H1 (cell line): ENCODE measurements at regions of chr16 and their contacts with region 1.

Region 1: GRCh38 chr16:71707199-71707598 is 17.3 kb downstream of the PHLPP2 start:
- DNase-seq: peak in 1 of 2 experiments; percentile 21
- H3K4me3 ChIP-seq: peak overlapping the region in 1 of 4 experiments; percentile 16; a peak in 1 of 8 replicates
- H3K27ac ChIP-seq: peak overlapping the region; percentile 77
- H3K4me1 ChIP-seq: peaks cover 3 to 21% (median 13%) of the 10 kb centered on the region in 4 experiments; a peak in 5 of 7 replicates
- H3K27me3 ChIP-seq: no peaks in the 10 kb centered on the region
- CTCF ChIP-seq: no peak
- EP300 ChIP-seq: 0 out of 3 replicates have a peak, but pooled peaks of 1 of the 2 experiments have one; percentile 42
- POLR2A ChIP-seq: no peak
- RAD21 ChIP-seq: no peak

Region 2: GRCh38 chr16:71723537-71724319 is 16.5 kb after region 1 on chr16:
- CTCF ChIA-PET with region 1: no interaction called
- POLR2A ChIA-PET with region 1: interaction called, 21 read pairs
- DNase-seq: peak; percentile 17 to 86
- H3K4me3 ChIP-seq: peak overlapping the region; percentile 68 to 86 (median 76)
- H3K27ac ChIP-seq: peak overlapping the region; percentile 38; the same call in 1 of the 2 replicates
- H3K4me1 ChIP-seq: peaks cover 0 to 3% (median 1%) of the 10 kb centered on the region in 4 experiments; a peak in 2 of 7 replicates
- H3K27me3 ChIP-seq: no peaks in the 10 kb centered on the region; a peak in 3 of 7 replicates
- CTCF ChIP-seq: no peak
- EP300 ChIP-seq: 0 out of 3 replicates have a peak, but pooled peaks of 1 of the 2 experiments have one; percentile 11
- POLR2A ChIP-seq: no peak
- RAD21 ChIP-seq: no peak; a peak in 1 of 4 replicates